ENCODE measurements at regions of chr9 and their contacts with region 1.

Region 1: GRCh38 chr9:17810728-17811571 is 232.1 kb downstream of the SH3GL2 start:
- DNase-seq: peak; percentile 42
- H3K4me3 Mint-ChIP-seq: no peak overlapping the region
- H3K27ac Mint-ChIP-seq: no peak overlapping the region
- H3K4me1 Mint-ChIP-seq: no peaks in the 10 kb centered on the region
- H3K27me3 Mint-ChIP-seq: no peaks in the 10 kb centered on the region

Region 2: DNA sequence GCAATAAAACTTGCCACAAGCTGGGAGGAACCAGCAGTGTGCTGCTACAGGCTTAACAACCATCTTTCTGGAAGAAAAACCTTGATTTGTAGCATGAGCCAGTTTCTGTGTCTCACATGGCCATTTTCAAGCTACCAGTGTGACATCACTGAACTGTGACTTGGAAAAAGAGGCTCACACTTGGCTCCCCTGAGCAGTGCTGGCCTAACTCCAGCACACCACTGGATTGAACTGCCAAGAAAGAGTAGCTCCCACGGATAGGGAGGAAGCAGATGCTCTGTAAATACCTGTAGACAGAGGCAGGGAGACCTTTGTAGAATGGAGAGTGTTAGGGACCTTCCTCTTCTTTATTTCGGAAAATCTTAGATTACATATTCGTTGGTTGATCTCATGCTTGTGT is 34.2 kb before region 1 on chr9:
- CTCF ChIA-PET with region 1: no interaction called
- POLR2A ChIA-PET with region 1: no interaction called
- DNase-seq: no peak
- H3K4me3 Mint-ChIP-seq: no peak overlapping the region
- H3K27ac Mint-ChIP-seq: no peak overlapping the region
- H3K4me1 Mint-ChIP-seq: no peaks in the 10 kb centered on the region
- H3K27me3 Mint-ChIP-seq: no peaks in the 10 kb centered on the region

Region 3: GRCh38 chr9:18208154-18209059 is 397.5 kb after region 1 on chr9:
- CTCF ChIA-PET with region 1: interaction called, 24 read pairs
- POLR2A ChIA-PET with region 1: no interaction called
- DNase-seq: no peak
- H3K4me3 Mint-ChIP-seq: no peak overlapping the region
- H3K27ac Mint-ChIP-seq: no peak overlapping the region
- H3K4me1 Mint-ChIP-seq: no peaks in the 10 kb centered on the region
- H3K27me3 Mint-ChIP-seq: no peaks in the 10 kb centered on the region